ENCODE measurements at regions of chr4 and their contacts with region 1.

Region 1: DNA sequence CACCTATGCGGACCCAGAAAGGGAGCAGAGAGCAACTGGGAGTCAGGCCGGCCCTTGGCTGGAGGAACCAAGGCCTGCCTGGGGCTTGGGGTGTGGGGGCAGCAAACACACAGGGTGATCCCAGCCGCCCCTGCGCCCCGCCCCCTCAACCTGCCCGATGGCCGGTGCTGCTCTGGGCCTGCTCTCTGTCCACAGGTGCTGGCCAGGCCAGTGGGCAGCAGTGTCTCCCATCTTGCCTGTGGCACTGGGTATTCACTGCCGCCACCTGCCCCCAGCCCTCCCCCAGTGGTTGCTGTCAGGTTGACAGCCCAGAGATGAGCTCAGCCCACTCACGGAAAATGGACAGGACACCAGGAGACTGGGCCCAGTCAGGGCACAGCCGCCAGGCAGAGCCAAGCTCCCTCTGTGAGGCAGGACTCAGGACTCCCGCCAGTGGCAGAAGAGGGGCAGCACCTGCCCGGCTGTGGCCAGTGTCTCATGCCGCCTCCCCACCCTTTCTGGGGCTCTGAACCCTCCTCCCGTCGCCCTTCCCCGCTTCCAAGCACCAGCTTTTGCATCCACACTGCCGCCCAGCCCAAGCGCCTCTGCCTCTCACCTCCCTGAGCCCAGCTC is 4.7 kb downstream of the NKX1-1 start:
- DNase-seq: no peak
- H3K4me3 ChIP-seq: no peak overlapping the region
- H3K27ac ChIP-seq: no peak overlapping the region
- H3K4me1 ChIP-seq: peaks cover 0 to 22% (median 3%) of the 10 kb centered on the region in 4 experiments; a peak in 5 of 7 replicates
- H3K27me3 ChIP-seq: peaks cover 59 to 66% (median 63%) of the 10 kb centered on the region in 4 experiments
- CTCF ChIP-seq: peak in 1 of 3 experiments; percentile 4; a peak in 2 of 4 replicates
- EP300 ChIP-seq: no peak
- POLR2A ChIP-seq: no peak
- RAD21 ChIP-seq: 0 out of 4 replicates have a peak, but pooled peaks of 1 of the 2 experiments have one; percentile 3

Region 2: DNA sequence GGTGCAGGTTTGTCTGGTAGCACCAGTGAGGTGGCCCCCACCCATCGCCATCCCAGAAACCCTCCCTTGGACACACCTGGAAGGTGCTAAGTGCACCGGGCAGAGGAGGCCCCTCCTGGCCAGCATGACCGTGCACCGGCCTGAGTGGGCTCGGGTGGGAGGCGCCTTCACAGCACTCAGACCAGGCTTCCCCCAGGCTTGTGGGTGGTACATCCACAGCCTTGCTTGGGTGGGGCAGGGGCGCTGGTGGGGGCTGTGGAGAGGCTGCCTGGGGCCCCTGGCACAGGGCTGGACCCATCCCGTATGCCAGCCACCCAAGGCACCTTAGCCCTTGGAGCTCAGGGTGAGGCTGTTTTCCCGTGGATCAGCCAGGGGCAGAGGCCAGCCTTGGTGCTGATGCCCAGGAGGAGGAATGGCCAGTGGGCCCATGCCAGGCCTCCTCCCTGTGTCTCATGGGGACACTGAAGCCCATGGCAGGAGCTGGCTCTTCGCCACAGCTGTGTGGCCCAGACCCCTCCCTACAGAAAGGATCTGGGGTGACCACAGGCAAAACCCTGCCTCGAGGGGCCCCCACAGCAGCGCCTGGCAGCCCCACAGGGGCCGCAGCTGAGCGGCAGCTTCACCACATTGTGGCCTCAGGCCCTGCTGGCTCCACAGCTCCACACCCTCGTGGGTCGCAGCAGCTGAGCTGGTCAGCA is 16.7 kb before region 1 on chr4:
- CTCF ChIA-PET with region 1: interaction called, 11 read pairs
- POLR2A ChIA-PET with region 1: no interaction called
- DNase-seq: no peak
- H3K4me3 ChIP-seq: no peak overlapping the region
- H3K27ac ChIP-seq: no peak overlapping the region
- H3K4me1 ChIP-seq: no peaks in the 10 kb centered on the region
- H3K27me3 ChIP-seq: no peaks in the 10 kb centered on the region
- CTCF ChIP-seq: no peak
- EP300 ChIP-seq: no peak
- POLR2A ChIP-seq: no peak
- RAD21 ChIP-seq: no peak